CD4-positive, alpha-beta memory T cell (primary cell): ENCODE measurements at regions of chr9 and their contacts with region 1.

Region 1: GRCh38 chr9:132354637-132355355 is at the start of gene SETX:
- DNase-seq: peak; percentile 89 to 93 (median 91)
- H3K4me3 ChIP-seq: peak within 1 kb of the TSS; percentile 66 to 86
- H3K4me3 Mint-ChIP-seq: peak within 1 kb of the TSS; percentile 91 to 95 (median 93)
- H3K27ac ChIP-seq: peak within 1 kb of the TSS; percentile 95
- H3K27ac Mint-ChIP-seq: peak within 1 kb of the TSS; percentile 92 to 100 (median 96)
- H3K4me1 ChIP-seq: peaks cover 38% of the 10 kb centered on the region
- H3K4me1 Mint-ChIP-seq: peaks cover 30 to 53% (median 38%) of the 10 kb centered on the region in 4 donors
- H3K27me3 ChIP-seq: no peaks in the 10 kb centered on the region
- H3K27me3 Mint-ChIP-seq: no peaks in the 10 kb centered on the region
- total RNA-seq, gene SETX: 91.3 to 94.3 TPM

Region 2: DNA sequence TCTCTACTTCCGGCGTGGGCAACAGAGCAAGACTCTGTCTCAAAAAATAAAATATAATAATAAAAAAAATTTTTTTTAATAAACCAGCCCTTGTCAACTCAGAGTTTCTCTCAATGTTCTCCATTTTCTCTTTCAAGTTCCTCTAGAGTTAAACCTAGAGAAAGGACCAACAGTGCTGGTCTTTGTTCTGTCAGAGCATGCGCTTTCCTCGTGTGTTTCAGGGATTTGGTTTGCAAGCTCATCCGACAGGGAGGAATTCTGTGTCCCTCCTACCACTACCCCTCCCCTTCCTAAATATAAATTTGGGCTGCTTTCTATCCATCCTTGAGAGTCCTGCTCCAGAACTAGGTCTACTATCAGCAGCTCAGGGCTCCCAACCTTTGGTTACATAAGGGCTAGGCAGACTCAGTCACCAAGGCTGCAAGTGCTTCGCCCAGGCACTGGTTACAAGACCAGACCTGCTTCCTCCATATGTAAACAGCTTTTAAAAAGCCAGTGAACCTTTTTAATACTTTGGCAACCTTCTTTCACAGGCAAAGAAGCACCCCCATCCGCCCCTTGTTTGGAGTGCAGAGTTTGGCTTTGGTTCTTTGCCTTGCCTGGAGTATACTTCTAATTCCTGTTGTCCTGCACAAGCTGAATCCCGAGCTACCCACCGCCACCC is 13.5 kb before region 1 on chr9:
- CTCF ChIA-PET with region 1: no interaction called
- POLR2A ChIA-PET with region 1: interaction called, 10 read pairs
- intact Hi-C with region 1: no loop called
- DNase-seq: no peak
- H3K4me3 ChIP-seq: no peak overlapping the region
- H3K4me3 Mint-ChIP-seq: no peak overlapping the region
- H3K27ac ChIP-seq: no peak overlapping the region
- H3K27ac Mint-ChIP-seq: peak overlapping the region in 3 of 7 donors; percentile 7 to 47 (median 17)
- H3K4me1 ChIP-seq: no peaks in the 10 kb centered on the region
- H3K4me1 Mint-ChIP-seq: peaks cover 8 to 20% (median 11%) of the 10 kb centered on the region in 4 donors
- H3K27me3 ChIP-seq: no peaks in the 10 kb centered on the region
- H3K27me3 Mint-ChIP-seq: no peaks in the 10 kb centered on the region